ENCODE measurements at regions of chr19 and their contacts with region 1.

Region 1: GRCh38 chr19:10760273-10760944 is 42.5 kb downstream of the DNM2 start:
- DNase-seq: peak in 1 of 5 donors; percentile 80
- H3K4me3 ChIP-seq: peak overlapping the region in 1 of 2 donors; percentile 20
- H3K4me3 Mint-ChIP-seq: peak overlapping the region; percentile 50 to 89 (median 80)
- H3K27ac ChIP-seq: peak overlapping the region; percentile 48
- H3K27ac Mint-ChIP-seq: peak overlapping the region; percentile 87 to 98 (median 95)
- H3K4me1 ChIP-seq: peaks cover 88% of the 10 kb centered on the region
- H3K4me1 Mint-ChIP-seq: peaks cover 51 to 94% (median 74%) of the 10 kb centered on the region in 4 donors
- H3K27me3 ChIP-seq: no peaks in the 10 kb centered on the region
- H3K27me3 Mint-ChIP-seq: no peaks in the 10 kb centered on the region

Region 2: GRCh38 chr19:10661946-10662345 is 98.5 kb before region 1 on chr19:
- CTCF ChIA-PET with region 1: no interaction called
- POLR2A ChIA-PET with region 1: no interaction called
- intact Hi-C with region 1: no loop called
- DNase-seq: no peak
- H3K4me3 ChIP-seq: no peak overlapping the region
- H3K4me3 Mint-ChIP-seq: peak overlapping the region in 2 of 8 donors; percentile 7 to 27
- H3K27ac ChIP-seq: no peak overlapping the region
- H3K27ac Mint-ChIP-seq: peak overlapping the region in 1 of 7 donors; percentile 1
- H3K4me1 ChIP-seq: peaks cover 79% of the 10 kb centered on the region
- H3K4me1 Mint-ChIP-seq: peaks cover 34 to 74% (median 49%) of the 10 kb centered on the region in 4 donors
- H3K27me3 ChIP-seq: no peaks in the 10 kb centered on the region
- H3K27me3 Mint-ChIP-seq: no peaks in the 10 kb centered on the region

Region 3: DNA sequence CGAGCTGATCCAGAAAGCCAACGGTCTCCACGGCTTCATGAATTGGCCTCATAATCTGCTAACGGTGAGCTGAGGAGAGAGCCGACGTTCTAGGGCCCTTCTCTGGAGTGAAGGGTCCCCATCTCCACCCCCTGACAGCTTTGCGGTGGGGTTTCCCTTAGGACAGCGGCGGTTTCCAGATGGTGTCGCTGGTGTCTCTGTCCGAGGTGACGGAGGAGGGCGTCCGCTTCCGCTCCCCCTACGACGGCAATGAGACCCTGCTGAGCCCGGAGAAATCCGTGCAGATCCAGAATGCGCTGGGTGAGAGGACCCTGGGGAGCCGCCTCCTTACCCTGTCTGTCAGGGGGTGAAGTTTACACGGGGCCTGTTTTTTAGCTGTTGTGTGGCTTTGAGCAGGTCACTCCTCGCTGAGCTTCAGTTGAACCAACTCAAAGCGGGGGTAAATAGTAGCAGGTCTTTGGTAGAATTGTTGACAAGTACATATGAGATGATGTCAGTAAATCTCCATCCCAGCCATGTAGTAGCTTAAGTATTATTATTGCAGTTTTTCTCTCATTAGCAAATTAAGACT is 58.4 kb before region 1 on chr19:
- CTCF ChIA-PET with region 1: no interaction called
- POLR2A ChIA-PET with region 1: interaction called, 11 read pairs
- intact Hi-C with region 1: no loop called
- DNase-seq: peak in 1 of 5 donors; percentile 20
- H3K4me3 ChIP-seq: peak overlapping the region; percentile 93 to 96
- H3K4me3 Mint-ChIP-seq: peak overlapping the region; percentile 88 to 99 (median 94)
- H3K27ac ChIP-seq: peak overlapping the region; percentile 55
- H3K27ac Mint-ChIP-seq: peak overlapping the region; percentile 58 to 91 (median 84)
- H3K4me1 ChIP-seq: peaks cover 10% of the 10 kb centered on the region
- H3K4me1 Mint-ChIP-seq: peaks cover 4 to 21% (median 10%) of the 10 kb centered on the region in 4 donors
- H3K27me3 ChIP-seq: no peaks in the 10 kb centered on the region
- H3K27me3 Mint-ChIP-seq: peaks cover 0 to 10% of the 10 kb centered on the region in 2 donors

Region 4: GRCh38 chr19:10730923-10731322 is 29.5 kb before region 1 on chr19:
- CTCF ChIA-PET with region 1: interaction called, 3 read pairs
- POLR2A ChIA-PET with region 1: interaction called, 14 read pairs
- intact Hi-C with region 1: loop called (anchors 1 kb)
- DNase-seq: no peak
- H3K4me3 ChIP-seq: no peak overlapping the region
- H3K4me3 Mint-ChIP-seq: peak overlapping the region in 4 of 8 donors; percentile 4 to 85 (median 47)
- H3K27ac ChIP-seq: peak overlapping the region; percentile 39
- H3K27ac Mint-ChIP-seq: peak overlapping the region; percentile 85 to 100 (median 95)
- H3K4me1 ChIP-seq: peaks cover 59% of the 10 kb centered on the region
- H3K4me1 Mint-ChIP-seq: peaks cover 25 to 60% (median 40%) of the 10 kb centered on the region in 4 donors
- H3K27me3 ChIP-seq: no peaks in the 10 kb centered on the region
- H3K27me3 Mint-ChIP-seq: no peaks in the 10 kb centered on the region

Region 5: DNA sequence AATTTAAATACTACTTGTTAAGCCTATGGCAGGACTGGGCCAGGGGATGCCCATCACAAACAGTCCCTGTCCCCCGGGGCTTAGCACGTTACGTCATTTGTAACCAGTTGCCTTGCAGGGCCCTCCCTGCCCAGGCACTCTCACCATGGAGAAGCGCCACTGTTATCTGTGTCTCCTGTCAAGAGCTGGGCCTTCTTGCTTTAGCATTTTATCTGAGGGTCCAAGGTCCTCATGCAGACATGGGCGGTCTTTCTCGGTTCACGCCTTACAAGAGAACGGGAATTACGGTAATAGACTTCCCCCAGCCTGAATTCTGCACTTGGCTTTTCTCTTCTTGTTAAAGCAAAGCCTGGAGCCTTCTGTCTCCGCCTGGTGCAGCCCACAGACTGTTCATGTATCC is 29.5 kb after region 1 on chr19:
- CTCF ChIA-PET with region 1: no interaction called
- POLR2A ChIA-PET with region 1: no interaction called
- intact Hi-C with region 1: no loop called
- DNase-seq: no peak
- H3K4me3 ChIP-seq: no peak overlapping the region
- H3K4me3 Mint-ChIP-seq: no peak overlapping the region
- H3K27ac ChIP-seq: no peak overlapping the region
- H3K27ac Mint-ChIP-seq: no peak overlapping the region
- H3K4me1 ChIP-seq: no peaks in the 10 kb centered on the region
- H3K4me1 Mint-ChIP-seq: peaks cover 0 to 4% (median 3%) of the 10 kb centered on the region in 4 donors
- H3K27me3 ChIP-seq: no peaks in the 10 kb centered on the region
- H3K27me3 Mint-ChIP-seq: no peaks in the 10 kb centered on the region

Region 6: GRCh38 chr19:10808937-10809652 is 48.7 kb after region 1 on chr19:
- CTCF ChIA-PET with region 1: no interaction called
- POLR2A ChIA-PET with region 1: interaction called, 10 read pairs
- intact Hi-C with region 1: no loop called
- DNase-seq: peak; percentile 29 to 73 (median 37)
- H3K4me3 ChIP-seq: no peak overlapping the region
- H3K4me3 Mint-ChIP-seq: peak overlapping the region in 5 of 8 donors; percentile 36 to 57 (median 55)
- H3K27ac ChIP-seq: peak overlapping the region; percentile 24
- H3K27ac Mint-ChIP-seq: peak overlapping the region; percentile 48 to 94 (median 72)
- H3K4me1 ChIP-seq: peaks cover 17% of the 10 kb centered on the region
- H3K4me1 Mint-ChIP-seq: peaks cover 15 to 38% (median 22%) of the 10 kb centered on the region in 4 donors
- H3K27me3 ChIP-seq: no peaks in the 10 kb centered on the region
- H3K27me3 Mint-ChIP-seq: no peaks in the 10 kb centered on the region

Region 7: GRCh38 chr19:10835754-10836477 is 75.5 kb after region 1 on chr19 and contains the start of gene TMED1:
- CTCF ChIA-PET with region 1: interaction called, 4 read pairs
- POLR2A ChIA-PET with region 1: interaction called, 18 read pairs
- intact Hi-C with region 1: loop called (anchors 1 kb)
- DNase-seq: peak; percentile 94 to 95 (median 94)
- H3K4me3 ChIP-seq: peak within 1 kb of the TSS; percentile 64 to 89
- H3K4me3 Mint-ChIP-seq: peak within 1 kb of the TSS; percentile 96 to 100 (median 98)
- H3K27ac ChIP-seq: peak within 1 kb of the TSS; percentile 95
- H3K27ac Mint-ChIP-seq: peak within 1 kb of the TSS; percentile 99 to 100 (median 100)
- H3K4me1 ChIP-seq: peaks cover 17% of the 10 kb centered on the region
- H3K4me1 Mint-ChIP-seq: peaks cover 9 to 21% (median 13%) of the 10 kb centered on the region in 4 donors
- H3K27me3 ChIP-seq: no peaks in the 10 kb centered on the region
- H3K27me3 Mint-ChIP-seq: no peaks in the 10 kb centered on the region
- total RNA-seq, gene TMED1: 9.0 to 10.9 TPM

Region 8: GRCh38 chr19:10864538-10864899 is 104.1 kb after region 1 on chr19:
- CTCF ChIA-PET with region 1: interaction called, 14 read pairs
- POLR2A ChIA-PET with region 1: interaction called, 8 read pairs
- intact Hi-C with region 1: no loop called
- DNase-seq: peak; percentile 72 to 76 (median 74)
- H3K4me3 ChIP-seq: no peak overlapping the region
- H3K4me3 Mint-ChIP-seq: peak overlapping the region in 3 of 8 donors; percentile 41 to 64 (median 59)
- H3K27ac ChIP-seq: no peak overlapping the region
- H3K27ac Mint-ChIP-seq: peak overlapping the region in 6 of 7 donors; percentile 3 to 87 (median 45)
- H3K4me1 ChIP-seq: peaks cover 9% of the 10 kb centered on the region
- H3K4me1 Mint-ChIP-seq: peaks cover 5 to 19% (median 14%) of the 10 kb centered on the region in 4 donors
- H3K27me3 ChIP-seq: no peaks in the 10 kb centered on the region
- H3K27me3 Mint-ChIP-seq: no peaks in the 10 kb centered on the region

Region 9: GRCh38 chr19:10870955-10871603 is 110.7 kb after region 1 on chr19 and contains the start of gene CARM1:
- CTCF ChIA-PET with region 1: interaction called, 3 read pairs
- POLR2A ChIA-PET with region 1: no interaction called
- intact Hi-C with region 1: loop called (anchors 1 kb)
- DNase-seq: peak; percentile 99 to 100 (median 99)
- H3K4me3 ChIP-seq: peak within 1 kb of the TSS; percentile 47 to 55
- H3K4me3 Mint-ChIP-seq: peak within 1 kb of the TSS; percentile 81 to 94 (median 86)
- H3K27ac ChIP-seq: peak within 1 kb of the TSS; percentile 55
- H3K27ac Mint-ChIP-seq: peak within 1 kb of the TSS; percentile 76 to 96 (median 92)
- H3K4me1 ChIP-seq: peaks cover 20% of the 10 kb centered on the region
- H3K4me1 Mint-ChIP-seq: peaks cover 8 to 24% (median 16%) of the 10 kb centered on the region in 4 donors
- H3K27me3 ChIP-seq: no peaks in the 10 kb centered on the region
- H3K27me3 Mint-ChIP-seq: no peaks in the 10 kb centered on the region
- total RNA-seq, gene CARM1: 25.2 to 26.5 TPM

Region 10: DNA sequence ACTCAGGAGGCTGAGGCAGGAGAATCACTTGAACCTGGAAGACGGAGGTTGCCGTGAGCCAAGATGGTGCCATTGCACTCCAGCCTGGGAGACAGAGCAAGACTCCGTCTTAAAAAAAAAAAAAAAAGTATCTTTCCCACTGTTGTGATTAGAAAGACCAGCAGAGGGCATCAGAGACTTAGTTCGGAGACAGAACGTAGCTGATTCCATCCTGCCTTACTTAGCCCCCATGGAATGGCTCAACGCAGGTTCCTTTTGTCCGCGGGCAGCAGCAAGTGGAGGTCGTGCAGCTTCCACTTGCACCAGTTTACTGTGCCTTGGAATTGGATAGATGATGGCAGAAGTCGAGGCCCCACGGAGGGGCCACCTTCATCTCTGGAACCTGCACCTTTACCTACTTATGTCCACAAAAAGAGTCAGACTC is 176.3 kb after region 1 on chr19:
- CTCF ChIA-PET with region 1: no interaction called
- POLR2A ChIA-PET with region 1: no interaction called
- intact Hi-C with region 1: no loop called
- DNase-seq: peak in 4 of 5 donors; percentile 53 to 63 (median 59)
- H3K4me3 ChIP-seq: no peak overlapping the region
- H3K4me3 Mint-ChIP-seq: peak overlapping the region in 1 of 8 donors; percentile 36
- H3K27ac ChIP-seq: no peak overlapping the region
- H3K27ac Mint-ChIP-seq: peak overlapping the region in 3 of 7 donors; percentile 48 to 82 (median 60)
- H3K4me1 ChIP-seq: peaks cover 10% of the 10 kb centered on the region
- H3K4me1 Mint-ChIP-seq: peaks cover 5 to 10% (median 8%) of the 10 kb centered on the region in 4 donors
- H3K27me3 ChIP-seq: no peaks in the 10 kb centered on the region
- H3K27me3 Mint-ChIP-seq: no peaks in the 10 kb centered on the region